Pancreas (tissue), 10 donors: ENCODE measurements at regions of chr21 and their contacts with region 1.

Region 1: GRCh38 chr21:28522014-28522799 is 470.5 kb downstream of the LTN1 start:
- DNase-seq: no peak
- ATAC-seq: peak in 2 of 4 donors; percentile 27 to 35
- H3K4me3 ChIP-seq: no peak overlapping the region
- H3K27ac ChIP-seq: no peak overlapping the region
- H3K4me1 ChIP-seq: no peaks in the 10 kb centered on the region
- H3K27me3 ChIP-seq: no peaks in the 10 kb centered on the region
- CTCF ChIP-seq: no peak

Region 2: GRCh38 chr21:28737674-28738419 is 215.6 kb after region 1 on chr21:
- intact Hi-C with region 1: loop called in 1 of 3 experiments (anchors 10 kb)
- DNase-seq: no peak
- ATAC-seq: no peak
- H3K4me3 ChIP-seq: no peak overlapping the region
- H3K27ac ChIP-seq: no peak overlapping the region
- H3K4me1 ChIP-seq: no peaks in the 10 kb centered on the region
- H3K27me3 ChIP-seq: no peaks in the 10 kb centered on the region
- CTCF ChIP-seq: no peak

Region 3: GRCh38 chr21:29125191-29125590 is 603.0 kb after region 1 on chr21:
- intact Hi-C with region 1: no loop called
- DNase-seq: no peak
- ATAC-seq: no peak
- H3K4me3 ChIP-seq: no peak overlapping the region
- H3K27ac ChIP-seq: no peak overlapping the region
- H3K4me1 ChIP-seq: no peaks in the 10 kb centered on the region
- H3K27me3 ChIP-seq: no peaks in the 10 kb centered on the region
- CTCF ChIP-seq: no peak